Activated T-helper 1 cell treated with anti-CD3 and anti-CD28 coated beads, Interleukin-12 subunit alpha, Interleukin-12 subunit beta, Interleukin-2, Interleukin-4 antibody, amounts not matched to agents 30 ng/mL and 10 ng/mL and 1 ng/mL, durations not matched to agents 14 hours and 24 hours and 36 hours (primary cell): ENCODE measurements at regions of chr5 and their contacts with region 1.

Region 1: GRCh38 chr5:103475629-103476240 is 86.9 kb downstream of the NUDT12 start:
- DNase-seq: no peak
- H3K4me3 Mint-ChIP-seq: no peak overlapping the region
- H3K27ac Mint-ChIP-seq: no peak overlapping the region
- H3K4me1 Mint-ChIP-seq: no peaks in the 10 kb centered on the region
- H3K27me3 Mint-ChIP-seq: peaks cover 2% of the 10 kb centered on the region

Region 2: DNA sequence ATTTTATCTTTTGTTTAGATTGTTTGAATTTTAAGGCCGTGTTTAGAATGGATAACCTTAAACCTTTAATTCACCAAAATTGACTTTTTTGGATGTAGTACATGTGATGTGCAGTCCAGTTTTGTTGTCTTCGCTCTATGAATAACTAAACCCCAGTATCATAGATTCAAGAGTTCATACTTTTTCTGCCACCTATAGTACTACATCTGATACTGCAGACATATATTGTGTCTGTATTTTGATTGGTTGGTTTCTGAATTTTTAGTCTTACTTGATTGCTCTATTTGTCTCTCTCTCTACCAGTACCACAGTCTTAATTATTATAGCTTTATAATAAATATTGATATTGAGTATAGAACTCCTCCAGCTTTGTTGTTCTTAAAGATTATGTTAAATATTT is 297.6 kb before region 1 on chr5:
- intact Hi-C with region 1: loop called (anchors 5 kb)
- DNase-seq: no peak
- H3K4me3 Mint-ChIP-seq: no peak overlapping the region
- H3K27ac Mint-ChIP-seq: no peak overlapping the region
- H3K4me1 Mint-ChIP-seq: no peaks in the 10 kb centered on the region
- H3K27me3 Mint-ChIP-seq: no peaks in the 10 kb centered on the region

Region 3: GRCh38 chr5:103232393-103232999 is 243.2 kb before region 1 on chr5:
- intact Hi-C with region 1: loop called (anchors 1 kb)
- DNase-seq: no peak
- H3K4me3 Mint-ChIP-seq: no peak overlapping the region
- H3K27ac Mint-ChIP-seq: no peak overlapping the region
- H3K4me1 Mint-ChIP-seq: no peaks in the 10 kb centered on the region
- H3K27me3 Mint-ChIP-seq: peaks cover 35% of the 10 kb centered on the region